ENCODE measurements at regions of chr20 and their contacts with region 1.

Region 1: GRCh38 chr20:653110-653589 is at the start of gene SRXN1:
- DNase-seq: peak; percentile 94 to 96 (median 95)
- ATAC-seq: peak; percentile 81 to 96 (median 96)
- H3K4me3 ChIP-seq: peak within 1 kb of the TSS; percentile 66 to 88 (median 73)
- H3K27ac ChIP-seq: peak within 1 kb of the TSS; percentile 81 to 99 (median 94)
- H3K4me1 ChIP-seq: peaks cover 0 to 39% (median 23%) of the 10 kb centered on the region in 12 donors
- H3K27me3 ChIP-seq: no peaks in the 10 kb centered on the region
- CTCF ChIP-seq: peak; percentile 41 to 74 (median 64)
- POLR2A ChIP-seq: peak; percentile 46 to 58
- total RNA-seq, gene SRXN1: 25.3 to 147 (median 39.1) TPM

Region 2: GRCh38 chr20:347640-348484 is 305.3 kb before region 1 on chr20:
- intact Hi-C with region 1: loop called in 6 of 10 experiments (anchors 5 to 10 kb)
- DNase-seq: peak; percentile 93 to 96 (median 95)
- ATAC-seq: peak; percentile 81 to 90 (median 90)
- H3K4me3 ChIP-seq: peak overlapping the region; percentile 69 to 97 (median 82)
- H3K27ac ChIP-seq: peak overlapping the region; percentile 88 to 99 (median 95)
- H3K4me1 ChIP-seq: peaks cover 0 to 35% (median 11%) of the 10 kb centered on the region in 12 donors
- H3K27me3 ChIP-seq: no peaks in the 10 kb centered on the region
- CTCF ChIP-seq: no peak
- POLR2A ChIP-seq: peak in 1 of 2 donors; percentile 61

Region 3: GRCh38 chr20:543369-544152 is 109.6 kb before region 1 on chr20 and contains the start of gene CSNK2A1:
- intact Hi-C with region 1: loop called in 1 of 10 experiments (anchors 1 kb)
- DNase-seq: peak; percentile 95 to 97 (median 96)
- ATAC-seq: peak; percentile 98 to 99 (median 98)
- H3K4me3 ChIP-seq: peak within 1 kb of the TSS; percentile 71 to 99 (median 90)
- H3K27ac ChIP-seq: peak within 1 kb of the TSS; percentile 88 to 96 (median 92)
- H3K4me1 ChIP-seq: peaks cover 8 to 55% (median 36%) of the 10 kb centered on the region in 12 donors
- H3K27me3 ChIP-seq: no peaks in the 10 kb centered on the region
- CTCF ChIP-seq: no peak
- POLR2A ChIP-seq: peak; percentile 33 to 82
- total RNA-seq, gene CSNK2A1: 107 to 136 (median 126) TPM

Region 4: DNA sequence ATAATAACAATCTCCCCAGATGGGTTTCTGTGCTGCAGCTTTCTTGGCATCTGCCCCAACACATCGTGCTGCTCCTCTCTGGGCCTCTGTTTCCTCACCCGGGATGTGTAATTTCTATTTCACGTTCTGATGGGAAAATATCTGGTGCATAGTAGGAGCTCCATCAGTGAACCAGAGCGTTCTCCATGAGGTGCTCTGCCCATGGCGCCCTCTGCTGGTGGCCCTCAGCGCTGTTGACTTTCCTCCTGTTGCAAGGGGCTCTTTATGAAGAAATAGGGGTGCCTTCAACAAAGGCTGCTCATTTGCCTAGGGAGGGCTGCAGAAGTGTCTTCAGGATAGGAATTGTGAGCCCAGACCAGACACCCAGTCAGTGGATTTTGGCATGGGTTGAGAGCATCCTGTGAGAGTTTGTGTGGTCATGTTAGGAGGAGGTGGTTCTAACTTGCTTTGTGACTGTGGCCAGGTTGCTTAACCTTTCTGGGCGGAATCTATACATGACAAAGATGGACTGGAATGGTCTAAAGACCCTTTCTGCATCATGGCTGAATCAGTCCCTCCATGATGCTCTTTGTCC is 14.3 kb after region 1 on chr20:
- intact Hi-C with region 1: loop called in 1 of 10 experiments (anchors 1 kb)
- DNase-seq: peak in 2 of 5 donors; percentile 60 to 75
- ATAC-seq: peak in 2 of 4 donors; percentile 45 to 51
- H3K4me3 ChIP-seq: no peak overlapping the region
- H3K27ac ChIP-seq: peak overlapping the region in 11 of 12 donors; percentile 6 to 80 (median 62)
- H3K4me1 ChIP-seq: peaks cover 0 to 53% (median 10%) of the 10 kb centered on the region in 12 donors
- H3K27me3 ChIP-seq: peaks cover 6 to 57% (median 39%) of the 10 kb centered on the region in 9 donors
- CTCF ChIP-seq: peak; percentile 71 to 92 (median 81)
- POLR2A ChIP-seq: no peak

Region 5: DNA sequence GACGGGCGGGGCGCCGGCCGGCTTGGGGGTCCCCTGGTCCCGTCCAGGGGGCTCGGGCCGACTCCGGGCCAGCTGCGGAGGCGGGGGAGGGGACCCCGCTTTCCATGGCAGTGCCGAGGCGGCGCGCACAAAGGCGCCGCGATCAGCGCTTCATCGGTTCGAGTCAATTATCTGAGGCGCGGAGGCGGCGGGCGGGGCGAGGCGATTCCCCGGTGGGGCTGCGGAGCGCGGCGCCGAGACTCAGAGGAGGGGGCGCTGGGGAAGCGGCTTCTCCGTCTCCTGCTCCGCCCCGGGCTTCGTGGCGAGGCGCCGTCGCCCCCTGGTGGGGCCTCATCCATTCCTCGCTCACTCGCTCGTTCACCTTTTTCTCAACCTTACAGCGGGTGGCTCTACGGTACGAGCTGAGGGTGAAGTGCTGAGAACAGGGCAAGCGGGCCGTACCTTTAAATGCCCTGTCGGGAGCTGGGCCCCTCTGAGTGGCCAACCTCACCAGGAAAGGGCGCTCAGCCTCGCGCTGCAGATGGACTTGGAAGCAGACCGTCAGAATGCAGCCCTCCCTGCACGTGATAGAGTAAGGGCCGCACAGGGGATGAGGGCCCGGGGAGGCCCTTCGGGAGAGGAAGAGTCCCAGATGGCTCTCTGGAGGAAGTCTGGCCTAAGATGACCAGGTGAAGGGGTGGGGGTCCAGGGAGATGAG is 75.2 kb after region 1 on chr20:
- intact Hi-C with region 1: loop called in 8 of 10 experiments (anchors 1 to 10 kb)
- DNase-seq: peak in 4 of 5 donors; percentile 33 to 73 (median 61)
- ATAC-seq: peak; percentile 69 to 89 (median 82)
- H3K4me3 ChIP-seq: peak overlapping the region; percentile 20 to 70 (median 61)
- H3K27ac ChIP-seq: peak overlapping the region in 1 of 12 donors; percentile 52
- H3K4me1 ChIP-seq: peaks cover 0 to 13% (median 3%) of the 10 kb centered on the region in 12 donors
- H3K27me3 ChIP-seq: peaks cover 0 to 52% (median 9%) of the 10 kb centered on the region in 9 donors
- CTCF ChIP-seq: peak; percentile 50 to 75 (median 65)
- POLR2A ChIP-seq: no peak

Region 6: GRCh38 chr20:739736-740135 is 86.6 kb after region 1 on chr20:
- intact Hi-C with region 1: loop called in 2 of 10 experiments (anchors 5 kb)
- DNase-seq: no peak
- ATAC-seq: no peak
- H3K4me3 ChIP-seq: no peak overlapping the region
- H3K27ac ChIP-seq: no peak overlapping the region
- H3K4me1 ChIP-seq: peaks cover 0 to 3% (median 0%) of the 10 kb centered on the region in 12 donors
- H3K27me3 ChIP-seq: peaks cover 0 to 3% (median 0%) of the 10 kb centered on the region in 9 donors
- CTCF ChIP-seq: no peak
- POLR2A ChIP-seq: no peak

Measured in heart left ventricle (tissue), 16 donors.